SK-N-SH (cell line): ENCODE measurements at regions of chr15 and their contacts with region 1.

Region 1: DNA sequence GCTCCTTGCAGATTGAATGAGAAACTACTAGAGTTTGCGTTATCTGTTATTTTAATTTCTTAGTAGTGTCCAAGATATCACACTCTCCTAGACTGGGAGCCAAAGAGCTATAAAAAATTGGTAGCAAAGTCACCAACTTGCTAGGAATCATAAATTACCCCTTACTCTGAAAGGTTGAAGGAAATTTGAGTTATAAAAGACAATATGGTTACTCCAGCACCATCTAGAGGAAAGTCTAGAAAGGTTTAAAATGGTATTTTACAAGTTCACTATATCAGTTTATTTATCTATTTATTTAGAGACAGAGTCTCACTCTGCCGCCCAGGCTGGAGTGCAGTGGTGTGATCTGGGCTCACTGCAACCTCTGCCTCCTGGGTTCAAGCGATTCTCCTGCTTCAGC is 121.6 kb downstream of the RBPMS2 start:
- DNase-seq: no peak
- H3K4me3 ChIP-seq: no peak overlapping the region
- H3K27ac ChIP-seq: no peak overlapping the region
- H3K4me1 ChIP-seq: peaks cover 3 to 5% of the 10 kb centered on the region in 2 experiments; a peak in 1 of 4 replicates
- H3K27me3 ChIP-seq: no peaks in the 10 kb centered on the region
- CTCF ChIP-seq: peak; percentile 66
- EP300 ChIP-seq: no peak
- RAD21 ChIP-seq: peak; percentile 64

Region 2: DNA sequence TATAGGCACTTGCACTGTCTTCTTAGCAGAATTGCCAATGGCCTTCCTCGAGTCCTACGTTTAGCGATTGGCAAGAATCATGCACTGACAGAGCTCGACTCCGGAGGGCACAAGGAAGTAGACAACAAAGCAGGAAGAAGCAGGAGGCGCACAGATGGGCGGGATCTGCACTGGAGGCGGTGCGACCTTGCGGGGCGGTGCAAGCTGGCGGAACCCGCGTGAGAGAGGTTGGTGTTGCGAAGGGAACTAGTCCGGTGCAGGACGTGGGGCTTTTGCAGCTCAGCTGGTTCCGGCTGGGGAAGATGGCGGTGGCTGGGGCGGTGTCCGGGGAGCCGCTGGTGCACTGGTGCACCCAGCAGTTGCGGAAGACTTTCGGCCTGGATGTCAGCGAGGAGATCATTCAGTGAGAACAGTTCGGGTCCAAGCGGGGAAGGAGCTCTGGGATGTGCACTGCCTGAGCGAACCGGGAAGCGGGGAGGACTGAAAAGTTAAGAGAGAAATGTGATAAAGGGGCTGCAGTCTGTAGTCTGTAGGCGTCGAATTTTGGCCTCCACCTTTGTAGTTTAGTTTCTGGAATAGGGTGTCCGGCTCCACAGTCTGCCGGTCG is 266.1 kb before region 1 on chr15 and contains the start of gene TRIP4:
- CTCF ChIA-PET with region 1: interaction called, 10 read pairs
- POLR2A ChIA-PET with region 1: no interaction called
- DNase-seq: peak; percentile 92
- H3K4me3 ChIP-seq: peak within 1 kb of the TSS; percentile 68 to 98
- H3K27ac ChIP-seq: peak within 1 kb of the TSS; percentile 74 to 81
- H3K4me1 ChIP-seq: peaks cover 0 to 3% of the 10 kb centered on the region in 2 experiments; a peak in 1 of 4 replicates
- H3K27me3 ChIP-seq: no peaks in the 10 kb centered on the region
- CTCF ChIP-seq: peak; percentile 19; the same call in 1 of the 2 replicates
- EP300 ChIP-seq: peak in 1 of 2 experiments; percentile 50; a peak in 1 of 4 replicates
- RAD21 ChIP-seq: peak; percentile 45; the same call in 1 of the 2 replicates
- polyA plus RNA-seq, gene TRIP4: 14.5 and 20.3 TPM in 2 replicates

Region 3: GRCh38 chr15:64634576-64635498 is 18.9 kb before region 1 on chr15:
- CTCF ChIA-PET with region 1: interaction called, 21 read pairs
- POLR2A ChIA-PET with region 1: no interaction called
- DNase-seq: no peak
- H3K4me3 ChIP-seq: no peak overlapping the region
- H3K27ac ChIP-seq: peak overlapping the region; percentile 52 to 87; a peak in 3 of 4 replicates
- H3K4me1 ChIP-seq: peaks cover 12 to 26% of the 10 kb centered on the region in 2 experiments; a peak in 3 of 4 replicates
- H3K27me3 ChIP-seq: no peaks in the 10 kb centered on the region
- CTCF ChIP-seq: no peak
- EP300 ChIP-seq: no peak
- RAD21 ChIP-seq: no peak

Region 4: DNA sequence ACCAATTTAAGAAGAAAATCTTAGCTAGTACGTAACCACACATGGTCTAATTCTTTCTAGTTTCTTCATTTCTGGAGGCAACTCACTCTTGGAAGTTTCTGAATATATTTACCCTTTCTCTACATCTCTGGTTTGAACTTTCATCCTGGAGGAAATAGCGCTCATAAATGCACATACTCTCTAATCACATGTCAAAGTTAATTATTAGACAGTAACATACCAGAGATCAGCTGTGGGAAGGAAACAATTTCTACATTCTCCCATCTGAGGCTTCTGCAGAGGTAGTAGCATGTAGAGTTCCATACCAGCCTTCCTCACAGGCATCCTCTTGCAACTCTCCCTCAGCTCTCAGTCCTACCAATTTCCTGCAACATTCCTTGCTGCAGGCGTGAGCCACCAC is 10.9 kb before region 1 on chr15:
- CTCF ChIA-PET with region 1: interaction called, 11 read pairs
- POLR2A ChIA-PET with region 1: no interaction called
- DNase-seq: no peak
- H3K4me3 ChIP-seq: no peak overlapping the region
- H3K27ac ChIP-seq: no peak overlapping the region
- H3K4me1 ChIP-seq: peaks cover 0 to 2% of the 10 kb centered on the region in 2 experiments; a peak in 1 of 4 replicates
- H3K27me3 ChIP-seq: no peaks in the 10 kb centered on the region
- CTCF ChIP-seq: no peak
- EP300 ChIP-seq: no peak
- RAD21 ChIP-seq: no peak

Region 5: DNA sequence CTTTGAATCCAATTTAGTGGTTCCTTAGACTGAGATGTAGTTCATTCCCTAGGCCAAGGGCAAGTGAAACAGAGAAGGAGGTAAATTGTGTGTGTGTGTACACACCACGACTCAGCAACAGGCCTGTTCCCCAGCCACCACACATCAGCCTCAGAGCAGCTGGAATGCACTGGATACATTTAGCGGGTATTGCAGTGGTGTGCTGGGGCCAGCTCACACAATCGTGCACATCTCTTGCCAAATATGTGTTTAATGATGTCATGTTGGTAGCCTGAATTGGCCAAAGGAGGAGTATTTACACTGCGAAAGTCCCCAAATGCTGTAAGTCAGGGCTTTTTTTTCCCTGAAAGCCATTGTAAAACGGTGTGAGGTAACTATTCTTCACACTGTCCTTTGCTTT is 39.4 kb after region 1 on chr15:
- CTCF ChIA-PET with region 1: no interaction called
- POLR2A ChIA-PET with region 1: no interaction called
- DNase-seq: no peak
- H3K4me3 ChIP-seq: no peak overlapping the region
- H3K27ac ChIP-seq: peak overlapping the region; percentile 14 to 47; a peak in 2 of 4 replicates
- H3K4me1 ChIP-seq: peaks cover 6 to 54% of the 10 kb centered on the region in 2 experiments; a peak in 3 of 4 replicates
- H3K27me3 ChIP-seq: no peaks in the 10 kb centered on the region
- CTCF ChIP-seq: no peak
- EP300 ChIP-seq: no peak
- RAD21 ChIP-seq: no peak